Tibial artery (tissue), 4 donors: ENCODE measurements at regions of chr13 and their contacts with region 1.

Region 1: GRCh38 chr13:114099191-114099590 is 33.2 kb downstream of the RASA3 start:
- DNase-seq: peak; percentile 87 to 95
- H3K4me3 ChIP-seq: no peak overlapping the region
- H3K27ac ChIP-seq: peak overlapping the region; percentile 61 to 65
- H3K4me1 ChIP-seq: peaks cover 0 to 33% (median 28%) of the 10 kb centered on the region in 4 donors
- H3K27me3 ChIP-seq: no peaks in the 10 kb centered on the region
- CTCF ChIP-seq: no peak

Region 2: GRCh38 chr13:113771709-113772331 is 327.4 kb before region 1 on chr13:
- intact Hi-C with region 1: no loop called
- DNase-seq: no peak
- H3K4me3 ChIP-seq: no peak overlapping the region
- H3K27ac ChIP-seq: no peak overlapping the region
- H3K4me1 ChIP-seq: no peaks in the 10 kb centered on the region
- H3K27me3 ChIP-seq: peaks cover 0 to 22% of the 10 kb centered on the region in 2 donors
- CTCF ChIP-seq: no peak

Region 3: GRCh38 chr13:114132419-114133121 is 33.4 kb after region 1 on chr13 and contains the start of gene RASA3:
- intact Hi-C with region 1: loop called (anchors 5 kb)
- DNase-seq: peak; percentile 73 to 89
- H3K4me3 ChIP-seq: peak within 1 kb of the TSS; percentile 93 to 94
- H3K27ac ChIP-seq: peak within 1 kb of the TSS; percentile 79 to 84
- H3K4me1 ChIP-seq: peaks cover 0 to 43% (median 39%) of the 10 kb centered on the region in 4 donors
- H3K27me3 ChIP-seq: no peaks in the 10 kb centered on the region
- CTCF ChIP-seq: no peak